B cell (primary cell): ENCODE measurements at regions of chr1 and their contacts with region 1.

Region 1: DNA sequence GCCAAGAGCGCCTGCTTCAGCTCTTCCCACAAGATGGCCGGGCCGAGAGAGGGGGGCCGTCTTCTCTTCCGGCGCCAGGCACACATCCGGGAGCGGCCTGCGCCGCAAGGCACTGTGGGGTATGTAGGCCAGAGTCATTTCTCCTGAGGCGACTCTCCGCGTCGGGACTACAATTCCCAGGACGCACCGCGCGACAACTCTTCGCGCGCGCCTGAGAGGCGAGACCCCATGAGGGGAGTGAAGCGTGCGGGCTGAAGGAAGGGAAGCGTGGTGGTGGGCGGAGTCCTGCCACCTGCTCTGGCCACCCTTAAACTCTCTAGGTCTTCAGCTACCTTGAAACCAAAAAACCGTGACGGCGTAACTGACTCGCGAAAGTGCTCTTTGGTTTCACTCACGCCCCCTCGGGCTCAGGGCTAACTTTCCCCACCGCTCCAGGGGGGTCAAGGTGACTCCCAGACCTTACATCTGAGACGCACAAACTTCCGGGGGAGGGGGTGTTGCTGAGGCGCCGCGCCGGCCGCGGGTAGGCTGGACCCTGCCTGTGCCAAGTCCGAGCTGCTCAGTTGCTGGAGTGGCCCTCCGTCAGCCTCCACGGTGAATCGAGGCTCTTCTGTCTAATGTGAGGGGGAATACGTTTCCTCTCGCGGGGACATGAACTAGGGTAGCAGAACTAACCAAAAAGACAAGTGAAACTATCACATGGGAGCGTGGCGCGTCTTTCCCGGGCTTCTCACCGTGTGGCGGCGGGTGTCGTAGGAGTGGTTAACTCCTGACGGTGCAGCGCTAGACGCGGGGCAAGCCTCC is at the start of gene SERBP1:
- DNase-seq: peak; percentile 99
- ATAC-seq: peak; percentile 89
- H3K4me3 ChIP-seq: peak within 1 kb of the TSS; percentile 75 to 97 (median 91)
- H3K4me3 Mint-ChIP-seq: peak within 1 kb of the TSS; percentile 91
- H3K27ac ChIP-seq: peak within 1 kb of the TSS; percentile 98
- H3K27ac Mint-ChIP-seq: peak within 1 kb of the TSS; percentile 93
- H3K4me1 ChIP-seq: peaks cover 28 to 32% of the 10 kb centered on the region in 2 donors
- H3K4me1 Mint-ChIP-seq: peaks cover 57% of the 10 kb centered on the region
- H3K27me3 ChIP-seq: no peaks in the 10 kb centered on the region
- H3K27me3 Mint-ChIP-seq: no peaks in the 10 kb centered on the region
- CTCF ChIP-seq: no peak
- total RNA-seq, gene SERBP1: 142 and 146 TPM in 2 replicates

Region 2: DNA sequence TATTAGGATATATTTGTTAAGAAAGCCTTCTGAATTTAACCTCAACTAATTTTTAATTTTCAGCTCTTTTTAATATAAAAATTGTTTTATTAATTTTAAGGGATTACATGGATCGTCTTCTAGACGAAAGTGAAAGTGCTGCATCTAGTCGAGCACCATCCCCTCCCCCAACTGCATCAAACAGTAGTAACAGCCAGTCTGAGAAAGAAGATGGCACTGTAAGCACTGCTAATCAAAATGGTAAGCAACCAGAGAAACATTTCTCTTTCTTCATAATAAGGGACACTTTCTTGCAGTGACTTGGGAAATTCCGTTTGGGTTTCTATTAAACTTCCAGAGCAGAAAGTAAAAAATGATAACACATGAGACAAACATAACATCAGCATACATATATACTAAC is 448.9 kb before region 1 on chr1:
- CTCF ChIA-PET with region 1: no interaction called
- POLR2A ChIA-PET with region 1: no interaction called
- intact Hi-C with region 1: loop called (anchors 5 kb)
- DNase-seq: peak; percentile 29
- ATAC-seq: no peak
- H3K4me3 ChIP-seq: peak overlapping the region in 1 of 5 experiments; percentile 5
- H3K4me3 Mint-ChIP-seq: peak overlapping the region; percentile 41
- H3K27ac ChIP-seq: peak overlapping the region in 1 of 2 donors; percentile 74
- H3K27ac Mint-ChIP-seq: no peak overlapping the region
- H3K4me1 ChIP-seq: peaks cover 0 to 6% of the 10 kb centered on the region in 2 donors
- H3K4me1 Mint-ChIP-seq: peaks cover 14% of the 10 kb centered on the region
- H3K27me3 ChIP-seq: no peaks in the 10 kb centered on the region
- H3K27me3 Mint-ChIP-seq: no peaks in the 10 kb centered on the region
- CTCF ChIP-seq: no peak

Region 3: DNA sequence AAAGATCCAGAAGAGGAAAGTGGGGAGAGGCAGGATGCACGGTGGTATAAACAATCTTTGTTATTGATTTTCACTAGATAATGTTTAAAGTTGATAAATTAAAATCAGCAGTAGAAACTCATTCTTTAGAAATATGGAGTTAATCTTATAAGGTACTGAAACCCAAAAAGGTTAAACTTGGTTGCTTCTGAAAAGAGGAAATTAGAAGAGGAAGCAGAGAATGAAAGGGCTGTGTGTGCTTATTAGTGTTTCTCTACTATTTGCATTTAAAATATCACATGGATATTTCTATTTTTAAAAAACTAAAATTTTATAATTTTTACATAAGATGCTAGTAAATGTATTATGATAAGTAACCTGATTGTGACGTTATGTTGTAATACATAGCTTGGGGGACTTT is 320.2 kb before region 1 on chr1:
- CTCF ChIA-PET with region 1: no interaction called
- POLR2A ChIA-PET with region 1: no interaction called
- intact Hi-C with region 1: loop called (anchors 5 kb)
- DNase-seq: peak; percentile 61
- ATAC-seq: peak; percentile 34
- H3K4me3 ChIP-seq: peak overlapping the region in 1 of 5 experiments; percentile 26
- H3K4me3 Mint-ChIP-seq: peak overlapping the region; percentile 14
- H3K27ac ChIP-seq: no peak overlapping the region
- H3K27ac Mint-ChIP-seq: no peak overlapping the region
- H3K4me1 ChIP-seq: peaks cover 27 to 38% of the 10 kb centered on the region in 2 donors
- H3K4me1 Mint-ChIP-seq: peaks cover 40% of the 10 kb centered on the region
- H3K27me3 ChIP-seq: no peaks in the 10 kb centered on the region
- H3K27me3 Mint-ChIP-seq: no peaks in the 10 kb centered on the region
- CTCF ChIP-seq: no peak

Region 4: DNA sequence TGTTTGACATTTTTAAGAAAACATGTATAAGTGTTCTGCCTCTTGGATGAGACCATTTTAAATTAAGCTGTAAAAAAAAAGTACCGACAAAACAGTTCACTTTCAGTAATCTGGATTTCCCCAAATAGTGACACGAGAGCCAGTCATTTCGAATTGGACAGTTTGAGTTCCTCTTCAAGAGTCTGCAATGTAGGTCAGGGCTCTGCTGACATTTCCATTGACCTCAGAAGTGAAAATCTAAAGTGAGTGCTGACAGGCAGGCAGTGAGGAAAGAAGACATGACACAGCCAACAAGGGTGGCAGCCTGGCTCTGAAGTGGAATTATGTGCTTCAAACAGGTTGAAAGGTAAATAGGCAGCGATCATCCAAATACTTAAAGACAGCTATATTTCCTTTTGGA is 264.4 kb before region 1 on chr1 and contains the start of gene IL23R:
- CTCF ChIA-PET with region 1: no interaction called
- POLR2A ChIA-PET with region 1: no interaction called
- intact Hi-C with region 1: no loop called
- DNase-seq: no peak
- ATAC-seq: no peak
- H3K4me3 ChIP-seq: no peak within 1 kb of the TSS
- H3K4me3 Mint-ChIP-seq: no peak within 1 kb of the TSS
- H3K27ac ChIP-seq: no peak within 1 kb of the TSS
- H3K27ac Mint-ChIP-seq: no peak within 1 kb of the TSS
- H3K4me1 ChIP-seq: no peaks in the 10 kb centered on the region
- H3K4me1 Mint-ChIP-seq: no peaks in the 10 kb centered on the region
- H3K27me3 ChIP-seq: peaks cover 0 to 9% (median 0%) of the 10 kb centered on the region in 4 experiments
- H3K27me3 Mint-ChIP-seq: peaks cover 8% of the 10 kb centered on the region
- CTCF ChIP-seq: no peak
- total RNA-seq, gene IL23R: not detected in 2 replicates

Region 5: DNA sequence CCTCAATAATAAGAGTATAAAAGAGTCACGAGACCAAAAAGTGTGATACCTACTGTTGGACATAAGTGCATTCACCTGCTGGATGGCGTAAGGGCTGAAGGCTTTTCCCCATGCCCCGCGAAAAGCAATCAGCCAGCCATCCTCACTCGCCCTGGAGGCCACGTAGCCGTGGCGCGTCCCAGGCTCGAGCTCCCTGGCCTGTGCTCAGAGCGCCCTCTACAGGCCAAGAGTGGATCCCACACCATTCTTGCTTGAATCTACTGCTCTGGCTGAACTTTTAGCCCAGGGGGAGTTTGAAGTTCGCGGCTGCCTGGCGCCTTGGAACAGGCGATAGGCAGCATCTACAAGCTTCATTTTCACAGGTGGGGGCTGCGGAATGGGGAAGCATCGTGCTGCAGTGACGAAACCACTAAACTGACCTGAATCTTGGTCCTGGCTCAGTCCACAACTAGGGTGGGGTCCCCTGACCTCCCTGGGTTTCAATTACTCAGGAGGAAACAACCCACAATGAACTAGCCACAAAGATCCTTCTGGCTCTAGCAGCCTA is 69.9 kb after region 1 on chr1:
- CTCF ChIA-PET with region 1: interaction called, 5 read pairs
- POLR2A ChIA-PET with region 1: interaction called, 4 read pairs
- intact Hi-C with region 1: loop called (anchors 1 kb)
- DNase-seq: peak; percentile 86
- ATAC-seq: peak; percentile 96
- H3K4me3 ChIP-seq: no peak overlapping the region
- H3K4me3 Mint-ChIP-seq: no peak overlapping the region
- H3K27ac ChIP-seq: no peak overlapping the region
- H3K27ac Mint-ChIP-seq: no peak overlapping the region
- H3K4me1 ChIP-seq: peaks cover 3 to 6% of the 10 kb centered on the region in 2 donors
- H3K4me1 Mint-ChIP-seq: peaks cover 4% of the 10 kb centered on the region
- H3K27me3 ChIP-seq: peaks cover 0 to 6% (median 0%) of the 10 kb centered on the region in 4 experiments
- H3K27me3 Mint-ChIP-seq: peaks cover 18% of the 10 kb centered on the region
- CTCF ChIP-seq: peak; percentile 98

Region 6: GRCh38 chr1:67735806-67736627 is 305.5 kb after region 1 on chr1:
- CTCF ChIA-PET with region 1: no interaction called
- POLR2A ChIA-PET with region 1: no interaction called
- intact Hi-C with region 1: loop called (anchors 1 kb)
- DNase-seq: peak; percentile 58
- ATAC-seq: peak; percentile 98
- H3K4me3 ChIP-seq: peak overlapping the region; percentile 18 to 55 (median 30)
- H3K4me3 Mint-ChIP-seq: peak overlapping the region; percentile 89
- H3K27ac ChIP-seq: peak overlapping the region; percentile 33 to 71
- H3K27ac Mint-ChIP-seq: peak overlapping the region; percentile 98
- H3K4me1 ChIP-seq: peaks cover 32 to 43% of the 10 kb centered on the region in 2 donors
- H3K4me1 Mint-ChIP-seq: peaks cover 40% of the 10 kb centered on the region
- H3K27me3 ChIP-seq: no peaks in the 10 kb centered on the region
- H3K27me3 Mint-ChIP-seq: no peaks in the 10 kb centered on the region
- CTCF ChIP-seq: no peak